ENCODE measurements at regions of chr1 and their contacts with region 1.

Region 1: DNA sequence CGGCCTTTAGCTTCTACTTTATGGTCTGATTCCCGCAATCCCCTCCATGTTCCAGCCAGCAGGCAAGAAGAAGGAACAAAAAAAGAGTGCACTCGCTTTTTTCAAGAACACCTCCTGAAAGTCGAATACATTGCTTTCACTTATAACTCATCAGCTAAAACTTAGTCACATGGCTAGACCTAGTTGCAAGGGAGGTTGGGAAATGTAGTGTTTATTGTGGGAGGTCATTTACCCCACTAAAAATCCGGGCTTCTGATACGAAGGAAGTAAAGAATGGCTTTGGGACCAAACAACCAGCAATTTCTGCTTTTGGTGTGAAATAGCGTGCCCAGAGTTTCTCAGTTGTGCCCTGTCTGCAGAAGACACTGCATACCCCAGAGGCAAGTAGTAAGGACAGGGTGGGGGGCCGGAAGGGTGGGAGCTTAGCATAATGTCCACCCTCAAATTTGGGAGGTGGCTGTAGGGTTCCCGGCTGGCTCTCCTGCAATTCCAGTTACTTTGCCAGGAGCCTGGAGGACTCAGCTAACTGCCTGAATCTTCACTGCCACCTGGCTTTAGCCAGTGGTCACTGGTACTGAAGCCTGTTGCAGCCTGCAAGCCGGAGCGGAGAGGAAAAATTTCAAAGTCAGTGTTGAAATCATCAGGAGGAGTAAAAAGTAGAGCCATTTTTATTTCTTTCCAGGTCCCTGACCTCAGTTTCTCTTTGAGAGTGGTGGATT is 57.7 kb upstream of the F3 start:
- DNase-seq: peak in 1 of 2 experiments; percentile 45
- H3K4me3 ChIP-seq: no peak overlapping the region
- H3K4me3 Mint-ChIP-seq: no peak overlapping the region
- H3K27ac Mint-ChIP-seq: no peak overlapping the region
- H3K4me1 ChIP-seq: peaks cover 43% of the 10 kb centered on the region
- H3K4me1 Mint-ChIP-seq: peaks cover 34% of the 10 kb centered on the region
- H3K27me3 ChIP-seq: no peaks in the 10 kb centered on the region
- H3K27me3 Mint-ChIP-seq: no peaks in the 10 kb centered on the region
- CTCF ChIP-seq: peak in 1 of 2 experiments; percentile 43

Region 2: GRCh38 chr1:94236630-94237290 is 362.5 kb before region 1 on chr1:
- CTCF ChIA-PET with region 1: no interaction called
- POLR2A ChIA-PET with region 1: no interaction called
- intact Hi-C with region 1: no loop called
- DNase-seq: peak; percentile 34 to 50
- H3K4me3 ChIP-seq: peak overlapping the region; percentile 81
- H3K4me3 Mint-ChIP-seq: peak overlapping the region; percentile 88
- H3K27ac Mint-ChIP-seq: peak overlapping the region; percentile 85
- H3K4me1 ChIP-seq: peaks cover 54% of the 10 kb centered on the region
- H3K4me1 Mint-ChIP-seq: peaks cover 47% of the 10 kb centered on the region
- H3K27me3 ChIP-seq: no peaks in the 10 kb centered on the region
- H3K27me3 Mint-ChIP-seq: no peaks in the 10 kb centered on the region
- CTCF ChIP-seq: no peak

Region 3: GRCh38 chr1:94481473-94481933 is 117.8 kb before region 1 on chr1:
- CTCF ChIA-PET with region 1: no interaction called
- POLR2A ChIA-PET with region 1: no interaction called
- intact Hi-C with region 1: no loop called
- DNase-seq: peak; percentile 48 to 52
- H3K4me3 ChIP-seq: no peak overlapping the region
- H3K4me3 Mint-ChIP-seq: no peak overlapping the region
- H3K27ac Mint-ChIP-seq: no peak overlapping the region
- H3K4me1 ChIP-seq: no peaks in the 10 kb centered on the region; the same call in 1 of the 2 replicates
- H3K4me1 Mint-ChIP-seq: peaks cover under 1% of the 10 kb centered on the region
- H3K27me3 ChIP-seq: no peaks in the 10 kb centered on the region
- H3K27me3 Mint-ChIP-seq: no peaks in the 10 kb centered on the region
- CTCF ChIP-seq: peak; percentile 54 to 59

Region 4: GRCh38 chr1:94527447-94528031 is 71.7 kb before region 1 on chr1:
- CTCF ChIA-PET with region 1: no interaction called
- POLR2A ChIA-PET with region 1: no interaction called
- intact Hi-C with region 1: loop called (anchors 1 kb)
- DNase-seq: peak; percentile 47 to 51
- H3K4me3 ChIP-seq: no peak overlapping the region
- H3K4me3 Mint-ChIP-seq: no peak overlapping the region
- H3K27ac Mint-ChIP-seq: peak overlapping the region; percentile 33
- H3K4me1 ChIP-seq: peaks cover 36% of the 10 kb centered on the region
- H3K4me1 Mint-ChIP-seq: peaks cover 45% of the 10 kb centered on the region
- H3K27me3 ChIP-seq: no peaks in the 10 kb centered on the region
- H3K27me3 Mint-ChIP-seq: no peaks in the 10 kb centered on the region
- CTCF ChIP-seq: peak in 1 of 2 experiments; percentile 23

Region 5: GRCh38 chr1:94541175-94542087 is 57.8 kb before region 1 on chr1 and contains the start of gene F3:
- CTCF ChIA-PET with region 1: interaction called, 4 read pairs
- POLR2A ChIA-PET with region 1: no interaction called
- intact Hi-C with region 1: loop called (anchors 2 kb)
- DNase-seq: peak; percentile 90 to 91
- H3K4me3 ChIP-seq: peak within 1 kb of the TSS; percentile 83
- H3K4me3 Mint-ChIP-seq: peak within 1 kb of the TSS; percentile 86
- H3K27ac Mint-ChIP-seq: peak within 1 kb of the TSS; percentile 86
- H3K4me1 ChIP-seq: peaks cover 18% of the 10 kb centered on the region
- H3K4me1 Mint-ChIP-seq: peaks cover 11% of the 10 kb centered on the region
- H3K27me3 ChIP-seq: no peaks in the 10 kb centered on the region
- H3K27me3 Mint-ChIP-seq: no peaks in the 10 kb centered on the region
- CTCF ChIP-seq: peak in 1 of 2 experiments; percentile 15
- total RNA-seq, gene F3: 21.7 and 28.5 TPM in 2 replicates

Region 6: GRCh38 chr1:94617134-94617805 is 18.0 kb after region 1 on chr1:
- CTCF ChIA-PET with region 1: no interaction called
- POLR2A ChIA-PET with region 1: no interaction called
- intact Hi-C with region 1: loop called (anchors 2 kb)
- DNase-seq: no peak
- H3K4me3 ChIP-seq: no peak overlapping the region
- H3K4me3 Mint-ChIP-seq: peak overlapping the region; percentile 67
- H3K27ac Mint-ChIP-seq: peak overlapping the region; percentile 86
- H3K4me1 ChIP-seq: peaks cover 50% of the 10 kb centered on the region
- H3K4me1 Mint-ChIP-seq: peaks cover 26% of the 10 kb centered on the region
- H3K27me3 ChIP-seq: no peaks in the 10 kb centered on the region
- H3K27me3 Mint-ChIP-seq: no peaks in the 10 kb centered on the region
- CTCF ChIP-seq: no peak

Region 7: DNA sequence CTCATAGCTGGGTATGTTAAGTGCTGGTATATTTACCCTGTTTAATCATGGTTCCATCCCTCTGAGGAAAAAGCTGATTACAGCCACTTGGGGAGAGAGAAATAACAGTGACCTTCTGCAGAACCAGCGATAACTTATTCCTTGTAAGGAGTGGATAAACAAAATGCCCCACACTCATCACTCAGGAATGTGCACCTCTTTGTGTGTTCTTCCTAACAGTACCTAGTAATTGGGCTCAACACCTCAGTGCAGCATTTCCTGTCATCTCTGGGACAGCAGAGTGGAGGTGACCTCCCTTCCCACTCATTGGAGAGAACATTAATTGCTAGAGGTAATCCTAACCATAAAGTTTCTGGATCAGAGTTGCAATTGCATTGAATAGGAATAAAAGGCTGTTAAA is 54.8 kb after region 1 on chr1:
- CTCF ChIA-PET with region 1: no interaction called
- POLR2A ChIA-PET with region 1: no interaction called
- intact Hi-C with region 1: loop called (anchors 5 kb)
- DNase-seq: peak; percentile 49 to 75
- H3K4me3 ChIP-seq: no peak overlapping the region
- H3K4me3 Mint-ChIP-seq: no peak overlapping the region
- H3K27ac Mint-ChIP-seq: peak overlapping the region; percentile 67
- H3K4me1 ChIP-seq: peaks cover 37% of the 10 kb centered on the region
- H3K4me1 Mint-ChIP-seq: peaks cover 7% of the 10 kb centered on the region
- H3K27me3 ChIP-seq: no peaks in the 10 kb centered on the region
- H3K27me3 Mint-ChIP-seq: no peaks in the 10 kb centered on the region
- CTCF ChIP-seq: no peak

Region 8: GRCh38 chr1:94713472-94714141 is 114.4 kb after region 1 on chr1:
- CTCF ChIA-PET with region 1: no interaction called
- POLR2A ChIA-PET with region 1: no interaction called
- intact Hi-C with region 1: no loop called
- DNase-seq: peak; percentile 60 to 86
- H3K4me3 ChIP-seq: no peak overlapping the region
- H3K4me3 Mint-ChIP-seq: no peak overlapping the region
- H3K27ac Mint-ChIP-seq: no peak overlapping the region
- H3K4me1 ChIP-seq: peaks cover 5% of the 10 kb centered on the region; the same call in 1 of the 2 replicates
- H3K4me1 Mint-ChIP-seq: no peaks in the 10 kb centered on the region
- H3K27me3 ChIP-seq: no peaks in the 10 kb centered on the region
- H3K27me3 Mint-ChIP-seq: no peaks in the 10 kb centered on the region
- CTCF ChIP-seq: no peak

Region 9: DNA sequence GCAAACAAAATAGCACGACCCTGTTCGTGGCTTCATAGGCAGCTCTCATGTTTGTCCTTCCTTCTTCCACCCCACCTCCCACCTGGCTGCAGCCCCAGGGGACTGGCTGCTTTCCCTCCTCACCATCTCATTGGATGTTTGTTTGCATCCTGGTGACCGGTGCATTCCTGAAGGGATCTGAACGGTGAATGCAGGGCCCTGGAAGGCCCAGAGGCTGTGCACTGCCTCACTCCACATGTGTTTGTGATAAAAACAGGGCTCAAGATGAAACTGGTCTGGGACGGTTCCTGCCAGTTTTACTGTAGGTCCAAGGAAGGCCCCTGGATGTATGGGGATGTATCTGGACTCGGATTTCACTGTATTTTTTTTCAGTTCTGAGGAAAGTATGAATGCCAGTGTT is 284.9 kb after region 1 on chr1:
- CTCF ChIA-PET with region 1: no interaction called
- POLR2A ChIA-PET with region 1: no interaction called
- intact Hi-C with region 1: no loop called
- DNase-seq: peak; percentile 58 to 74
- H3K4me3 ChIP-seq: no peak overlapping the region
- H3K4me3 Mint-ChIP-seq: no peak overlapping the region
- H3K27ac Mint-ChIP-seq: peak overlapping the region; percentile 55
- H3K4me1 ChIP-seq: peaks cover 5% of the 10 kb centered on the region
- H3K4me1 Mint-ChIP-seq: peaks cover 7% of the 10 kb centered on the region
- H3K27me3 ChIP-seq: no peaks in the 10 kb centered on the region
- H3K27me3 Mint-ChIP-seq: no peaks in the 10 kb centered on the region
- CTCF ChIP-seq: no peak

Measured in Caco-2 (cell line).